WTC11 (cell line): ENCODE measurements at regions of chr13 and their contacts with region 1.

Region 1: DNA sequence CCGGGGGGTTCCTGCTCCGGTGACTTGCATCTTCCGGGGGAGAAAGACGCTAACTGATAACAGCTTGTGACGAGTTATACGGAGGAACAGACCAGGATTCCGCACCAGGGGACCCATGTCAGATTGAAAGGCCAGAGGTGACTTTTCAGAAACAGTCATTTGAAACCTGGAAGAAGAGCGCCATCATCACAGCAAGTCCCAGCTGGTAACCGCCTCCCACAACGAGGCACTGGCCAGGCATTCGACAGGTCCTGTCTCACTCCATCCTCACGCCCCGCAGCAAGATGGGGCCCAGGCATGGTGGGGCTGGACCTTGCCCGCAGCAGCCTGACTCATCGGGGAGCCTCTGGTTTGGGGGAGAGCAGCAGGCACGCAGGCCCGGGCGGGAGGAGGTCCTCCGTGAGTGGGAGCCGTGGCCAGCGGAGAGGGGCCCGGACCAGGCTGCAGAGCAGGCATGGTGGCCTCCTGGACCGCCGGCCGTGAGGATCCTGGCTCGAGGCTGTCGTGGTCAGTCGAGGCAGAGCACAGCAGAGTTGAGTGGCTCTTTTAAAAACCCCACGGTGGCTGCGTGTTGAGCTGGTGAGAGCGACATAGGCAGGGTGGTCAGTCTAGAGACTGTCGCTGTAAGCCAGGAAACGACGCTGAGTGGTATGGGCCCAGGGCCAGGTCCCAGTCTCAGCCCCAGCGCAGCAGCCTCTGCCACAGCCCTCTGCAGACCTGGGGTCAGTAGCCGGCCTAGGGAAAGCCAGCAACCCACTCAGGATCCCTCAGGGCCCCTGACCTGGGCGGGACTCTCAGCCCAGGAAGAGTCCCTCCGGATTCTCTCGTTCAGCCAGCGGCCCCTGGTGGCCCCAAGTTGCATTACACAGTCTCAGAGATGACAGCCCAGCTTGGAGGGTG is 94.9 kb upstream of the MCF2L start:
- DNase-seq: peak; percentile 87
- ATAC-seq: peak; percentile 94
- H3K4me3 Mint-ChIP-seq: no peak overlapping the region
- H3K27ac Mint-ChIP-seq: peak overlapping the region; percentile 85
- H3K4me1 Mint-ChIP-seq: peaks cover 5% of the 10 kb centered on the region; the same call in 1 of the 2 replicates
- H3K27me3 Mint-ChIP-seq: no peaks in the 10 kb centered on the region
- CTCF ChIP-seq: peak; percentile 97

Region 2: DNA sequence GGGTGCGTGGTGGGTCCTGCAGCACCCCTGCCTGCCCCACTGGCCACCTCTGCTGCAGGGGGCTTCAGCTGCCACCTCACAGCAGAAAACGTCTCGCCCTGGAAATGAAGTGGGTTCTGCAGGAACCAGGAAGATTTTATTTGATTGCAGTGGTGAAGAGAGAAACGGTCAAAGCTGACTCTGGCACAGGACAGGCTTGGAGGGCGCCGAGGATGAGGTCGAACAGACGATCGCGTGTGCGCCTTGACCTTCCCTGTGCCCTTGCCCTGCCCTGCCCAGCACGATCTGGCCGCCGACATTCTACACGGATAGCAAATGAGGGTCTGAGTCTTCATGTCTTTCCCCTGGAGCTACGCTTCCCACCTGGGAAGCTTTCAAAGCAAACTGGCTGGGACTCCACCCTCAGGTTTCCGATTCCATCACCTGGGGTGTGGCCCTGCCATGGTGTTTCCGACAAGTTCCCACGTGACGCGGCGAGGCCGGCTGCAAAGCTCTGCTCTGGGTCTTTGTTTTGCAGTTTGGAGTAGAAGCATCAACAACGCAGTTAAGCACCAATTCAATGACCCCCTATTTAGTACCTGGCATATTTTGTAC is 235.8 kb before region 1 on chr13:
- CTCF ChIA-PET with region 1: interaction called, 17 read pairs
- POLR2A ChIA-PET with region 1: no interaction called
- DNase-seq: no peak
- ATAC-seq: no peak
- H3K4me3 Mint-ChIP-seq: no peak overlapping the region
- H3K27ac Mint-ChIP-seq: no peak overlapping the region; the same call in 1 of the 2 replicates
- H3K4me1 Mint-ChIP-seq: peaks cover 30% of the 10 kb centered on the region
- H3K27me3 Mint-ChIP-seq: peaks cover 33% of the 10 kb centered on the region
- CTCF ChIP-seq: no peak

Region 3: GRCh38 chr13:112885782-112886268 is 11.7 kb after region 1 on chr13:
- CTCF ChIA-PET with region 1: interaction called, 16 read pairs
- POLR2A ChIA-PET with region 1: no interaction called
- DNase-seq: peak; percentile 83
- ATAC-seq: peak; percentile 95
- H3K4me3 Mint-ChIP-seq: peak overlapping the region; percentile 29
- H3K27ac Mint-ChIP-seq: no peak overlapping the region
- H3K4me1 Mint-ChIP-seq: peaks cover 17% of the 10 kb centered on the region
- H3K27me3 Mint-ChIP-seq: peaks cover 13% of the 10 kb centered on the region
- CTCF ChIP-seq: no peak

Region 4: GRCh38 chr13:112893570-112894422 is 19.7 kb after region 1 on chr13:
- CTCF ChIA-PET with region 1: interaction called, 11 read pairs
- POLR2A ChIA-PET with region 1: no interaction called
- DNase-seq: peak; percentile 67
- ATAC-seq: peak; percentile 53
- H3K4me3 Mint-ChIP-seq: peak overlapping the region; percentile 64
- H3K27ac Mint-ChIP-seq: peak overlapping the region; percentile 86
- H3K4me1 Mint-ChIP-seq: peaks cover 44% of the 10 kb centered on the region
- H3K27me3 Mint-ChIP-seq: peaks cover 40% of the 10 kb centered on the region
- CTCF ChIP-seq: no peak